ENCODE measurements at regions of chr17 and their contacts with region 1.

Region 1: GRCh38 chr17:4143563-4144421 is 795 bp downstream of the CYB5D2 start:
- DNase-seq: peak; percentile 85 to 98 (median 90)
- ATAC-seq: peak; percentile 67
- H3K4me3 ChIP-seq: peak overlapping the region; percentile 95
- H3K4me3 Mint-ChIP-seq: peak overlapping the region; percentile 96
- H3K27ac ChIP-seq: peak overlapping the region; percentile 98 to 100
- H3K27ac Mint-ChIP-seq: peak overlapping the region; percentile 100
- H3K4me1 ChIP-seq: peaks cover 44% of the 10 kb centered on the region
- H3K4me1 Mint-ChIP-seq: peaks cover 49% of the 10 kb centered on the region
- H3K27me3 ChIP-seq: no peaks in the 10 kb centered on the region
- H3K27me3 Mint-ChIP-seq: no peaks in the 10 kb centered on the region
- CTCF ChIP-seq: no peak

Region 2: DNA sequence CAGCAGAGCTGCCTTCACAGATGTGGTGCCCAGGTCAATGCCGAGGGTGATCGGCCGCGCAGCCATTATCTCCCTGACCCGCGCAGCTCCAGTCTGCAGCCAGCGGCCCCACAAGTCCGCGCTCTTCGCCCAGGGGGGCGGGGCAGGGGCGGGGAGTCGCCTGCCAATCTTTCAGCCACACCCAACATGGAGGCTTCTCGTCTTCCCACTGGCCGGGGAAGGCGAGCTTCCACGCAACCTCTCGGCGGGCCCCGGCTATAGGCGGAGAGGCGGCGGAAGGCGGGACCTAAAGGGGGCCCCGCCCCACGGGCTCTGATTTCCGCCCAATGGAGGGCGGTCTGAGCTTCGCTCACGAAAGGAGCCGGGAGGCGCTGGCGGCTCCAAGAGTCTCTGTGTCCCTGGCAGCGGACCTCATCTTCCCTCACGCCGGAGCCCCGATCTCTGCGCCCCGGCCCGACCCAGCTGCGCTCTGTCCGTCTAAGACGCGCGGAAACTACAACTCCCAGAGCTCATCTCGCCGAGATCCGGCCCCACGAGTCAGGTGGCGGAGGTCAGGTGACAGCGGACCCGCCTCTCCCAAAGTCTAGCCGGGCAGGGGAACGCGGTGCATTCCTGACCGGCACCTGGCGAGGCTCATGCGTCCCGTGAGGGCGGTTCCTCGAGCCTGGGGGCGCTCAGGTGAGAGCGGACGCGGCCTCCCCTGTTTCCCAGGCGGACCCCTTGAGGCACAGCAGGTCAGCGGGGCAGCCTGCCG is 507.5 kb before region 1 on chr17 and contains the starts of genes CTNS and SHPK:
- CTCF ChIA-PET with region 1: no interaction called
- POLR2A ChIA-PET with region 1: interaction called, 17 read pairs
- intact Hi-C with region 1: no loop called
- DNase-seq: peak; percentile 86 to 96 (median 92)
- ATAC-seq: peak; percentile 98
- H3K4me3 ChIP-seq: peak within 1 kb of the TSS; percentile 80
- H3K4me3 Mint-ChIP-seq: peak within 1 kb of the TSS; percentile 98
- H3K27ac ChIP-seq: peak within 1 kb of the TSS; percentile 93 to 99
- H3K27ac Mint-ChIP-seq: peak within 1 kb of the TSS; percentile 99
- H3K4me1 ChIP-seq: peaks cover 27% of the 10 kb centered on the region
- H3K4me1 Mint-ChIP-seq: peaks cover 21% of the 10 kb centered on the region
- H3K27me3 ChIP-seq: no peaks in the 10 kb centered on the region
- H3K27me3 Mint-ChIP-seq: no peaks in the 10 kb centered on the region
- CTCF ChIP-seq: no peak
- total RNA-seq, gene CTNS: 3.3 to 4.9 TPM
- total RNA-seq, gene SHPK: 3.4 TPM

Region 3: DNA sequence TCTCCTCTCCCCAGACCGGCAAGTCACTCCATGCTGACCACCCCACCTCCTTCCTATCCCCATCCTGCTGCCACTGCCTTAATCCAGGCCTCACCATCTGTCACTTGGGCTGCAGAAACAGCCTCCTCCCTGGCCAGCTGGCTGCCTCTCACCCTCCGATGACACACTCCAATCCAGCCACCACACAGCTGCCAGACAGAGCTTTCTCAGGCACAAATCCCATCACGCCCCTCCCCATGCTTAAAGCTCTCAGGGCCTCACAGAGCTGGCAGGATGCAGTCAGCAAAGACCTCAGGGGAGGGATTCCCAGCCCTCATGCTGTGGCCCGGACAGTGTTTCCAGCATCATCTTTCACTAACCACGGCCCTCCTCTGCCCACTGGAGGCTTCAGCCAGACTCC is 264.6 kb before region 1 on chr17:
- CTCF ChIA-PET with region 1: no interaction called
- POLR2A ChIA-PET with region 1: no interaction called
- intact Hi-C with region 1: no loop called
- DNase-seq: no peak
- ATAC-seq: no peak
- H3K4me3 ChIP-seq: no peak overlapping the region
- H3K4me3 Mint-ChIP-seq: no peak overlapping the region
- H3K27ac ChIP-seq: no peak overlapping the region
- H3K27ac Mint-ChIP-seq: no peak overlapping the region
- H3K4me1 ChIP-seq: no peaks in the 10 kb centered on the region
- H3K4me1 Mint-ChIP-seq: no peaks in the 10 kb centered on the region
- H3K27me3 ChIP-seq: no peaks in the 10 kb centered on the region
- H3K27me3 Mint-ChIP-seq: no peaks in the 10 kb centered on the region
- CTCF ChIP-seq: no peak

Region 4: GRCh38 chr17:4082136-4082924 is 61.5 kb before region 1 on chr17:
- CTCF ChIA-PET with region 1: no interaction called
- POLR2A ChIA-PET with region 1: interaction called, 13 read pairs
- intact Hi-C with region 1: no loop called
- DNase-seq: peak in 1 of 14 experiments; percentile 48
- ATAC-seq: peak; percentile 46
- H3K4me3 ChIP-seq: peak overlapping the region; percentile 5
- H3K4me3 Mint-ChIP-seq: no peak overlapping the region
- H3K27ac ChIP-seq: peak overlapping the region in 1 of 2 donors; percentile 43
- H3K27ac Mint-ChIP-seq: peak overlapping the region; percentile 86
- H3K4me1 ChIP-seq: peaks cover 13% of the 10 kb centered on the region
- H3K4me1 Mint-ChIP-seq: peaks cover 7% of the 10 kb centered on the region
- H3K27me3 ChIP-seq: no peaks in the 10 kb centered on the region
- H3K27me3 Mint-ChIP-seq: no peaks in the 10 kb centered on the region
- CTCF ChIP-seq: no peak

Region 5: DNA sequence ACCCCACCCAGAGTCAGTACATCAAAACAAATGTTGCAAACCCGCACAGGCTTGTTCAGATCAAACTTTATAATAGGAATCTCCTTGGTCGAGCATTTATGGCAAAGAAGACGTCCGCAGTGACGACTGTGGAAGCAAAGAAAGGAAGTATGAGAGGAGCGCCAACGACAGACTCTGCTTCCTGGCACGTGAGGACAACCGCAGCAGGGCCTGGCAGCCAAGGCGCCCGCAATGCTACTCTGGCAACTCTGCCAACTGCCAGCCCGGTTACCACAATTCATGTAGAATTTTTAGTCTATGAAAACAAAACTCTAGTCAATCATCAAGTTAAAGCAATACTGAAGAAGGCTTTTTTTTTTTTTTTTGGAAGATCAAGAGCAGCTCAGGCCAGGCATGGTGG is 24.0 kb after region 1 on chr17:
- CTCF ChIA-PET with region 1: no interaction called
- POLR2A ChIA-PET with region 1: interaction called, 34 read pairs
- intact Hi-C with region 1: no loop called
- DNase-seq: peak in 8 of 14 experiments; percentile 18 to 72 (median 42)
- ATAC-seq: peak; percentile 82
- H3K4me3 ChIP-seq: no peak overlapping the region
- H3K4me3 Mint-ChIP-seq: peak overlapping the region; percentile 25
- H3K27ac ChIP-seq: no peak overlapping the region
- H3K27ac Mint-ChIP-seq: peak overlapping the region; percentile 88
- H3K4me1 ChIP-seq: peaks cover 8% of the 10 kb centered on the region
- H3K4me1 Mint-ChIP-seq: peaks cover 14% of the 10 kb centered on the region
- H3K27me3 ChIP-seq: no peaks in the 10 kb centered on the region
- H3K27me3 Mint-ChIP-seq: no peaks in the 10 kb centered on the region
- CTCF ChIP-seq: no peak

Region 6: DNA sequence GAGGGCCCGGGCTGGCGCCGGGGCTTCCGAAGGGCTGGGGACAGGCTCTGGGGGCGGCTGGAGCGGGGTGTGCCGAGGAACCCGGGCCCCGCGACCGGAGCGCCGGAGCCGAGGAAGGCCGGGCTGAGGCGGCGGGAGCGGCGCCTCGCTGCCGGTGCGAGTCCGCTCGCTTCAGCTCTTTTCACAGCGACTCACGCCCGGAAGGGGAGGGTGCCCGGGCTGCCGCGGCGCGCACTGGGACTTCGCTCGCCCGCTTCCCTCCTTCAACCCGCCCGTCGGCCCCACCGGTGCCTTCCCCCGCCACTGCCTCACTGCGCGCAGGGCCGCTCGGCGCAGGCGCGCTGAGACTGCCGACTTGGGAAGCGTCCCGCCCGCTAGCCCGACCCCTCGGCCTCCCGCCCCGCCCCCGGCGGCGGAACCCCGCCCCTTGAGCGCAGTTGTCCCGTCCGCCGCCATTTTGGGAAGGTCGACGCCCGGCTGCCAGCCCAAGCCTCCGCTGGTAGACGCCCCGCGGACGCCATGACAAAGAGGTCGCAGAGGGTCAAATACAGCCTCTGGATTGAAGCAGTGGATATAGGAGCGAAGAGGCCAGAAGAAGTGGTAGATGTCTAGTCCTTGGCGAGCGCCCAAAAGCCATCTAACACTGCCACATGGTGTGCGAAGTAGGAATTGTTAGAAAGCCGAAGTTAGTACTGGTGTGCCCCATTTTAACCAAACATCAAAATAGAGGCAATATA is 222.7 kb after region 1 on chr17 and contains the start of gene UBE2G1:
- CTCF ChIA-PET with region 1: no interaction called
- POLR2A ChIA-PET with region 1: interaction called, 57 read pairs
- intact Hi-C with region 1: loop called in 1 of 2 experiments (anchors 2 kb)
- DNase-seq: peak; percentile 97 to 100 (median 99)
- ATAC-seq: peak; percentile 82
- H3K4me3 ChIP-seq: peak within 1 kb of the TSS; percentile 54
- H3K4me3 Mint-ChIP-seq: peak within 1 kb of the TSS; percentile 90
- H3K27ac ChIP-seq: peak within 1 kb of the TSS; percentile 68 to 91
- H3K27ac Mint-ChIP-seq: peak within 1 kb of the TSS; percentile 89
- H3K4me1 ChIP-seq: peaks cover 41% of the 10 kb centered on the region
- H3K4me1 Mint-ChIP-seq: peaks cover 31% of the 10 kb centered on the region
- H3K27me3 ChIP-seq: no peaks in the 10 kb centered on the region
- H3K27me3 Mint-ChIP-seq: no peaks in the 10 kb centered on the region
- CTCF ChIP-seq: no peak
- total RNA-seq, gene UBE2G1: 58.5 to 58.8 TPM

Region 7: GRCh38 chr17:5191541-5192417 is 1048.0 kb after region 1 on chr17 and contains the start of gene ZNF594:
- CTCF ChIA-PET with region 1: interaction called, 4 read pairs
- POLR2A ChIA-PET with region 1: interaction called, 3 read pairs
- intact Hi-C with region 1: loop called in 1 of 2 experiments (anchors 10 kb)
- DNase-seq: peak; percentile 94 to 98 (median 96)
- ATAC-seq: peak; percentile 99
- H3K4me3 ChIP-seq: peak within 1 kb of the TSS; percentile 97
- H3K4me3 Mint-ChIP-seq: peak within 1 kb of the TSS; percentile 95
- H3K27ac ChIP-seq: peak within 1 kb of the TSS; percentile 51 to 81
- H3K27ac Mint-ChIP-seq: peak within 1 kb of the TSS; percentile 88
- H3K4me1 ChIP-seq: peaks cover 23% of the 10 kb centered on the region
- H3K4me1 Mint-ChIP-seq: peaks cover 33% of the 10 kb centered on the region
- H3K27me3 ChIP-seq: no peaks in the 10 kb centered on the region
- H3K27me3 Mint-ChIP-seq: no peaks in the 10 kb centered on the region
- CTCF ChIP-seq: peak; percentile 80
- total RNA-seq, gene ZNF594: 2.2 to 3.1 TPM

Measured in CD4-positive, alpha-beta T cell (primary cell).